Sigmoid colon (tissue), 7 donors: ENCODE measurements at regions of chr2 and their contacts with region 1.

Region 1: DNA sequence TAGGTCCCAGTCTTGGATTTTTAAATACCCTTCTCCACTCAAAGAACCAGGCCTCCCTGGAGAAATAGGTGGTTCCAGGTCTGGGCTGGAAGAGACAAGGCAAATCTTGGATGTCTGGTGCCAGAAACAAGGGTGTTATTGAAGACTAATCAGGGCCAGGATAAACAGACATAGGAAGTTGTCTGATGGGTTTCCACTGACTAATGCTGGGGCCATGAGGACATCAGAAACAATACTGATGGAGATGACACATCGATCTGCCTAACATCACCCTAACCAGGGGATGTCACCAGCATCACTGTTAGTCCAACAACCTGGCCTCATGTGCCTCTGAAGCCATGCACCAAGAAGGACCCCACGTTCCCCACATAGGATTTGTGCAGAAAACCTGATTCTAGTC is 42.5 kb upstream of the GLI2 start:
- DNase-seq: no peak
- H3K4me3 ChIP-seq: no peak overlapping the region
- H3K27ac ChIP-seq: no peak overlapping the region
- H3K4me1 ChIP-seq: peaks cover 0 to 10% (median 5%) of the 10 kb centered on the region in 4 donors
- H3K27me3 ChIP-seq: peaks cover 0 to 6% (median 0%) of the 10 kb centered on the region in 3 donors
- CTCF ChIP-seq: no peak
- EP300 ChIP-seq: no peak
- POLR2A ChIP-seq: no peak

Region 2: GRCh38 chr2:120476141-120476540 is 217.0 kb before region 1 on chr2:
- intact Hi-C with region 1: no loop called
- DNase-seq: peak; percentile 48
- H3K4me3 ChIP-seq: no peak overlapping the region
- H3K27ac ChIP-seq: no peak overlapping the region
- H3K4me1 ChIP-seq: no peaks in the 10 kb centered on the region
- H3K27me3 ChIP-seq: no peaks in the 10 kb centered on the region
- CTCF ChIP-seq: no peak
- EP300 ChIP-seq: no peak
- POLR2A ChIP-seq: no peak

Region 3: DNA sequence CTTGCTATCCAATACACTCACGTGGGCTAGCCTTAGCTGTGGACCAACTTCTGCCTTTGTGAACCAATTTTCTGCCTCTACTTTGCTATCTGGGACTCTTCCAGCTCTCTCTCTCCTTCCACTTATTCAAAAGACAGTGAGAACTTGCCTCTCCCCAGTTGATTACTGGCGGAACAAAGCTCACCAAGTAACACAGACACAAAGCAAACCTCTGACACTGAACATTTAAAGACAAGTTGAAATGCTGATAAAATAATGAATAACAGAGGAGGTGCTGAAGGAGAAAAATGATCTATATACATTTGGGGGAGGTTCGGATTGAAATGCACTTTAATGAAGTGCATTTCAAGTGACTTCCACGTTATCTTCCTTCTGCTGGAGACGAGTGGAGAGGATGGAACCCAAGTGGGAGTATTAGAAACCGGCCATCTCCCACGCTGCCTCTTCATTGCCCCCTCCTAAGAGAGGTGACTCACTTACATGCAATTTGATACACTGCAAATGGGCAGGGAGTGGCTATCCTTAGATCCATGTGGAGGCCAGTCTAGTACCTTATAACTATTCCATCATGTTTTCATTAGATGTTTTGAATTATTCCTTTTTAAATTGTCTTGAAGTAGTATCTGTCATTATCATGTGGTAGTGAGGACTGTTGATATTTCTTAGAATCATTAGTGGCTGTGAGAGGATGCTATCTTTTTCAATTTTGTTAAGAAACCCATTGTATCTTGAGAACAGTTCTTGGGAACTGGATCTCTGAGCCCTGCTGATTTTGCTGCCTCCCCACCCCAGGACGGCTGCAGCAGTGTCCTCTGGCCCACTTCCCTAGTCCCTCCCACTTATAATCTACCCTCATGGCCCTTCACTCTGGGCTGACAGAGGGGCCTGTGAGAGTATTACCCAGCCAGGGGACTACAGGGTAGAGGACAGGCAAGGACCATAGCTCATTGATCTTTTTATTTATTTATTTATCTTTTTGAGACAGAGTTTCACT is 36.6 kb after region 1 on chr2:
- intact Hi-C with region 1: no loop called
- DNase-seq: no peak
- H3K4me3 ChIP-seq: no peak overlapping the region
- H3K27ac ChIP-seq: no peak overlapping the region
- H3K4me1 ChIP-seq: peaks cover 0 to 17% (median 15%) of the 10 kb centered on the region in 4 donors
- H3K27me3 ChIP-seq: peaks cover 0 to under 1% (median 0%) of the 10 kb centered on the region in 3 donors
- CTCF ChIP-seq: no peak
- EP300 ChIP-seq: no peak
- POLR2A ChIP-seq: no peak

Region 4: DNA sequence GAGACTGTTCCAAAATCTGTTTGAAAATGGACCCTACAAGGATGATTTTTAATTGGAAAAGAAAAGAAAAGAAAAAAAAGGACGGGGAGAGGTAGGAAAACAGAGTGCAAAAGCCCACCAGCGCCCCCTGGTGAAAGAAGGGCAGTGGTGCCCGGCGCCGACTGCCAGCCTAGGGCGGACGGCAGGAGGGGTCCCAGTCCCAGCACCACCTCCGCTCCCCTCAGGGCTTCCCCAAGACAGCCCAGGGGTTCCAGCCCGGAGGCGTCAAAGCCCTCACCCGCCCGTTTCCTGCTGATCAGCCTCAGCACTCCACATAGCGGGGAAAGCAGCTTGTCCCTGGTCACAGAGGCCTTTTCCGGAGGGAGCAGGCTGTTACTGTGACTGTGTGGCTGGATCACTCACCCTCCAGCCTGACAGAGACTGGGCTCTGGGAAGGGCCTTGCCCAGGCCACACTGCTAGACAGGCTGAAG is 377.9 kb after region 1 on chr2:
- intact Hi-C with region 1: loop called (anchors 1 kb)
- DNase-seq: peak; percentile 77
- H3K4me3 ChIP-seq: no peak overlapping the region
- H3K27ac ChIP-seq: no peak overlapping the region
- H3K4me1 ChIP-seq: peaks cover 0 to 30% (median 23%) of the 10 kb centered on the region in 4 donors
- H3K27me3 ChIP-seq: peaks cover 0 to 3% (median 0%) of the 10 kb centered on the region in 3 donors
- CTCF ChIP-seq: peak; percentile 78 to 96 (median 91)
- EP300 ChIP-seq: no peak
- POLR2A ChIP-seq: no peak